ENCODE measurements at regions of chr5 and their contacts with region 1.

Region 1: DNA sequence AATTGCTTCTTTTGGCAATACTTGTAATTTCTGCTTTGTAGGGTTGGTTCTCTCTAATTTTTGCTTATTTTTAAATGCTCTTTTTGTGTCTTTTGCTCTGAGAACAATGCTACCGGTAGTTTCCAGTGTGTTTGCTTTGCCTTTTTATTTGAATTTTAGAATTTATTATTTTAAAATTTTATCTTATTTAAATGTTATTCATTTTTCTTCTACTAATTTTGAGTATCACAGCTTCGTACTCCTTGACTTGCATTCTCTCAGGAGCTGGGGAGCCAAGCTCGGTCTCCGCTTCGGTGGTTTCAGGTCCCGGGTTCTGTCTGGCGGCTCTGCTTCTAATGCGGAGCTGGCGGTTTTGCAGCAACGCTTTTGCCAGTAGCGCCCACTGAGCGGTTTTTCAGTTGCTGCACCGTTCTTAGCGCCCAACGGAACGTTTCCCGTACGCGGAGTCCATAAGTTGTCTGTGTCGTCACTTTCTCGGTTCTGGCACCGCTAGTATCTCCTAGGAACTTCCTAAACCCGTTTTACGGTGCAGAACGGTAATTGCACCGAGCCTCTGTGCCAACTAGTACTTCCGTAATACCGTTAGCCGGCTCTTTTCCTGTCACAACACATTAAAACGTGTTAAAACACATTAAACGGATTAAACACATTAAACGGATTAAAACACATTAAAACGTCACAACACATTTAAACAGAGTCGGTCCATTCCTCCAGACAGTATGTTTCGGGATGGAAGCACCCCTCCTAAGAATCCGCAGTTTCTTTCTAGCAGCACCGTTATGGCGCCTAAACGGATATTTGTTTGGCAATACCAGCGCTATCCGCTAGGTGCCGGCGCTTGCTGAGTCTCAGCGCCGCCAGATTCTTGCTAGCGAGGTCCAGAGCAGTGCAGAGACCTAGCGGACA is 45.6 kb downstream of the ANXA2R start:
- DNase-seq: peak; percentile 91
- H3K4me3 Mint-ChIP-seq: peak overlapping the region; percentile 99
- H3K27ac Mint-ChIP-seq: peak overlapping the region; percentile 100
- H3K4me1 Mint-ChIP-seq: peaks cover 29% of the 10 kb centered on the region
- H3K27me3 Mint-ChIP-seq: no peaks in the 10 kb centered on the region

Region 2: GRCh38 chr5:42908509-42909488 is 85.7 kb before region 1 on chr5:
- CTCF ChIA-PET with region 1: interaction called, 13 read pairs
- POLR2A ChIA-PET with region 1: interaction called, 3 read pairs
- DNase-seq: peak; percentile 95
- H3K4me3 Mint-ChIP-seq: peak overlapping the region; percentile 74
- H3K27ac Mint-ChIP-seq: peak overlapping the region; percentile 11
- H3K4me1 Mint-ChIP-seq: peaks cover 23% of the 10 kb centered on the region
- H3K27me3 Mint-ChIP-seq: peaks cover 30% of the 10 kb centered on the region

Region 3: GRCh38 chr5:42950440-42951292 is 43.8 kb before region 1 on chr5:
- CTCF ChIA-PET with region 1: interaction called, 19 read pairs
- POLR2A ChIA-PET with region 1: interaction called, 11 read pairs
- DNase-seq: peak; percentile 65
- H3K4me3 Mint-ChIP-seq: peak overlapping the region; percentile 84
- H3K27ac Mint-ChIP-seq: peak overlapping the region; percentile 100
- H3K4me1 Mint-ChIP-seq: peaks cover 43% of the 10 kb centered on the region
- H3K27me3 Mint-ChIP-seq: no peaks in the 10 kb centered on the region

Region 4: GRCh38 chr5:43008369-43009153 is 14.1 kb after region 1 on chr5:
- CTCF ChIA-PET with region 1: interaction called, 36 read pairs
- POLR2A ChIA-PET with region 1: interaction called, 12 read pairs
- DNase-seq: peak; percentile 90
- H3K4me3 Mint-ChIP-seq: peak overlapping the region; percentile 80
- H3K27ac Mint-ChIP-seq: peak overlapping the region; percentile 97
- H3K4me1 Mint-ChIP-seq: peaks cover 44% of the 10 kb centered on the region
- H3K27me3 Mint-ChIP-seq: no peaks in the 10 kb centered on the region

Region 5: GRCh38 chr5:43019614-43020293 is 25.3 kb after region 1 on chr5:
- CTCF ChIA-PET with region 1: interaction called, 22 read pairs
- POLR2A ChIA-PET with region 1: interaction called, 50 read pairs
- DNase-seq: peak; percentile 94
- H3K4me3 Mint-ChIP-seq: peak overlapping the region; percentile 99
- H3K27ac Mint-ChIP-seq: peak overlapping the region; percentile 100
- H3K4me1 Mint-ChIP-seq: peaks cover 40% of the 10 kb centered on the region
- H3K27me3 Mint-ChIP-seq: no peaks in the 10 kb centered on the region

Region 6: DNA sequence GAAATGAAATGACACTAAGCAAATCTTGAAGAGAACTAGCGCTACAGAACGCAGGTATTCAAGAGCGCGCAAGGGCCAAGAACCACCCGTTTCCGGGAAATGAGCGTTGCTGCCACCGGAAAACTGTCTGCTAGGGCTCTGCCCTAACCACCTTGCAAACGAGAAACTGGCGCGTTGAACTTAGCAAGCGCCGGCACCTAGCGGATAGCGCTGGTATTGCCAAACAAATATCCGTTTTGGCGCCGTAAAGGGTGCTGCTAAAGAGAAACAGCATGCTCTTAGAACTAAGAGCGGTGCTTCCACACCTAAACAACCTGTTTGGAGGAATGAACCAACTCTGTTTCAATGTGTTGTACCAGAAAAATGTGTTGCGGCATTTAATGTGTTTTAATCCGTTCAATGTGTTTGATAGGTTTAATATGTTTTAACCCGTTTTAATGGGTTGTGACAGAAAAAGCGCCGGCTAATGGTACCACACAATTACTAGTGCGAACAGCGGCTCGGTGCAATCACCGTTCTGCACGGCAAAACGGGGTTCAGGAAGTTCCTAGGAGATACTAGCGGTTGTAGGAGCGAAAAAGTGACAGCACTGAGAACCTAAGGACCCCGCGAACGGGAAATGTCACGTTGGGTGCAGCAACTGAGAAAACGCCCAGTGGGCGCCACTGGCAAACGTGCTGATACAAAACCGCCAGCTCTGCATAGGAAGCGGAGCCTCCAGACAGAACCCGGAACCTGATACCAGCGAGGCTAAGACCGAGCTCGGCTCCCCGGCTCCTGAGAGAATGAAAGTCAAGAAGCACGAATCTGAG is 46.0 kb after region 1 on chr5 and contains the start of gene ANXA2R:
- CTCF ChIA-PET with region 1: interaction called, 32 read pairs
- POLR2A ChIA-PET with region 1: interaction called, 33 read pairs
- DNase-seq: peak; percentile 98
- H3K4me3 Mint-ChIP-seq: peak within 1 kb of the TSS; percentile 94
- H3K27ac Mint-ChIP-seq: peak within 1 kb of the TSS; percentile 99
- H3K4me1 Mint-ChIP-seq: peaks cover 41% of the 10 kb centered on the region
- H3K27me3 Mint-ChIP-seq: no peaks in the 10 kb centered on the region
- total RNA-seq, gene ANXA2R: 29.5 to 32.0 TPM

Region 7: GRCh38 chr5:43066799-43067741 is 72.6 kb after region 1 on chr5:
- CTCF ChIA-PET with region 1: interaction called, 3 read pairs
- POLR2A ChIA-PET with region 1: interaction called, 16 read pairs
- DNase-seq: peak; percentile 90
- H3K4me3 Mint-ChIP-seq: peak overlapping the region; percentile 97
- H3K27ac Mint-ChIP-seq: peak overlapping the region; percentile 99
- H3K4me1 Mint-ChIP-seq: peaks cover 45% of the 10 kb centered on the region
- H3K27me3 Mint-ChIP-seq: no peaks in the 10 kb centered on the region